Sciatic nerve (tissue), 2 donors: ENCODE measurements at regions of chr15 and their contacts with region 1.

Region 1: DNA sequence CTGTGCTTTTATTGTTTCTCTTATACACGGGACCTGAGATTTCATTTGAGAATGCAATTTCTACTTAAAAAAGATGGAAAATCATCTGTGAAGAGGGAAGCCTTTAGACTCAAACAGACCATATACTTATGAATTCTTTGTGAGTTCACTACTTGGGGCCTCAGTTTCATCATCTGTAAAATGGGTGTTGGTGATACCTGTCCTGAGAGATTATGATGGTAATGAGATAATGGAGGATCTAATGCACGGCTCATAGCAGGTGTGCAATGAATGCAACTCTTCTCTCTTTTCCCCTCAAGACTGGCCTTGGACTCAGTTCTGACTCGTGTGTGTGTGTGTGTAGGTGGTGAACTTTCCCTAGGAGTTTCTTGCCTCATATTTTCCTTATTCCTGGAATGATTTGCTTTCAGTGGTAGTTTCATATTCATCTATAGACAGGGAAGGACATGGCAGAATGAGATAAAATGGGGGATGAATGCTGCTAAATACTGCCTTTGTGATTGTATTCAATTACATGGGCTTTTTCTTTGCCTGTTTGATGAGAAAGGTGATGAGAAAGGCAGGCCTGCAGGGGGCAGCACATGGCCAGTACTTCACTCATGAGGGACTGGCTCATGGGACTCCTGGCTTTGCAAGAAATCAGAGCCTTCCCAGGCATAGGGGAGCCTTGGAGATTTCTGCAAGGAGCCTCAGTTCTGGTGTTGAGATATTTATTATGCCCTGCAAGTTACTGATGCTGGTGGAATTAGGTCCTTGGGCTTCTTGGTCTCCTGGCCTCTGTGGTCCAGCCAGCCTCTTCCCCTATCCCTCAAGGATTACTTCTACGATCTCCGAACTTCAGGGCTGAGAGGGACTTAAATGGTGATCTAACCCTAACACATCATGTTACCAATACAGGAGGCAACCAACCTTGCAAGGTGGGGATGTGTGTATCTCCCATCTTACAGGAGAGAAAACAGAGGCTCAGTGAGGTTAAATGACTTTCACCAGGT is 70.7 kb downstream of the RPLP1 start:
- DNase-seq: peak; percentile 94
- ATAC-seq: peak; percentile 85

Region 2: DNA sequence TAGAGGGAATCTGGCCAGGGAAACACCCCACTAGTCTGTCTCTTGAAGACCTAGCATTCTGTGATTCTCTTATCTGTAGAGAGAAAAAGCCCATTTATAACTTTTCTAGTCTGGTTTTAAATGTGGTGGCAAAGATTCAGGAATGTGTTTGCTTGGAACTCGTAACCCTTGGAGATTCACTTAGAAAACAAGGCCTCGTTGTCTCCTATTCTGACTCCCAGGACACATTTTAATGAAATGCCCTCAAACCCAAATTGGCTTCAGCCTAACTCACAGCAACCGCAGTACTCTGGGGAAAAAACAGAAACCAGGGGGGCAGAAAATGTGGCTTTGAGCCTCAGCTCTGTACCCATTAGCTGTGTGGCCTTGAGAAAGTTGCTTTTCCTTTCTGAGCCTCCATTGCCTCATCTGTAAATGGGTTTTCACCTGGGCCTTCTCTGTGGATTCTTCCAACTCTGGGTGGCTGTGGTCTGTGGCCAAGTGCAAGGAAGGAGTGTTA is 34.2 kb before region 1 on chr15:
- intact Hi-C with region 1: no loop called
- DNase-seq: peak; percentile 49
- ATAC-seq: peak; percentile 72

Region 3: DNA sequence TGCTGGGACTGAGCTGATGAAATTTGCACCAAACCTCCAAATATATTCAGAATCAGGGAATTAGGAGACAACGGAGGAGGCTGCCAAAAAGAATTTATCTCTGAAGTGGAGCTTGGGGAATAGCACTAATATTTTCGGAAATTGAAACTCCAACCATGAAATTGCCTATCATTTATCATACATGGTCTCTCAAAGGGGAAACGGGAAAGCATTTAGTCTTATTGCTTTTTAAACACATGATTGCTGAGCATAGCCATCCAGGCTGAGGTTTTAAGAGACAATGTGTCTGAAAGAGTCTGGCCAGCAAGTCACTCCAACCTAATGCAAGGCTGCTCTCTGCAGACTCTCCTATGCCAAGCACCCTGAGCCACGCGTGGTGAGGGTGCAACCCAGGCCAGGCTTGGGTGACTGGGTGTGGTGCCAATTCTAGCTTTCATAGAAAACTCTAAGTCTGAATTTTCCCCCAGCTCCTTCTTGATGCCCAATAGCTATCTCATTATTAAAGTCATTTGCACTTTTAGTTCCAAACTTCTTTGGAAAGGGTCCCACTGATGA is 129.5 kb after region 1 on chr15:
- intact Hi-C with region 1: loop called (anchors 10 kb)
- DNase-seq: no peak
- ATAC-seq: peak; percentile 84